IMR-90 (cell line): ENCODE measurements at regions of chr15 and their contacts with region 1.

Region 1: GRCh38 chr15:57327985-57328471 is 48.3 kb upstream of the CGNL1 start:
- DNase-seq: peak; percentile 99
- ATAC-seq: peak; percentile 88
- H3K4me3 ChIP-seq: no peak overlapping the region; the same call in 1 of the 2 replicates
- H3K27ac ChIP-seq: peak overlapping the region; percentile 38
- H3K4me1 ChIP-seq: peaks cover 4% of the 10 kb centered on the region
- H3K27me3 ChIP-seq: no peaks in the 10 kb centered on the region
- CTCF ChIP-seq: no peak
- POLR2A ChIP-seq: peak; percentile 23; the same call in 1 of the 2 replicates
- RAD21 ChIP-seq: no peak

Region 2: DNA sequence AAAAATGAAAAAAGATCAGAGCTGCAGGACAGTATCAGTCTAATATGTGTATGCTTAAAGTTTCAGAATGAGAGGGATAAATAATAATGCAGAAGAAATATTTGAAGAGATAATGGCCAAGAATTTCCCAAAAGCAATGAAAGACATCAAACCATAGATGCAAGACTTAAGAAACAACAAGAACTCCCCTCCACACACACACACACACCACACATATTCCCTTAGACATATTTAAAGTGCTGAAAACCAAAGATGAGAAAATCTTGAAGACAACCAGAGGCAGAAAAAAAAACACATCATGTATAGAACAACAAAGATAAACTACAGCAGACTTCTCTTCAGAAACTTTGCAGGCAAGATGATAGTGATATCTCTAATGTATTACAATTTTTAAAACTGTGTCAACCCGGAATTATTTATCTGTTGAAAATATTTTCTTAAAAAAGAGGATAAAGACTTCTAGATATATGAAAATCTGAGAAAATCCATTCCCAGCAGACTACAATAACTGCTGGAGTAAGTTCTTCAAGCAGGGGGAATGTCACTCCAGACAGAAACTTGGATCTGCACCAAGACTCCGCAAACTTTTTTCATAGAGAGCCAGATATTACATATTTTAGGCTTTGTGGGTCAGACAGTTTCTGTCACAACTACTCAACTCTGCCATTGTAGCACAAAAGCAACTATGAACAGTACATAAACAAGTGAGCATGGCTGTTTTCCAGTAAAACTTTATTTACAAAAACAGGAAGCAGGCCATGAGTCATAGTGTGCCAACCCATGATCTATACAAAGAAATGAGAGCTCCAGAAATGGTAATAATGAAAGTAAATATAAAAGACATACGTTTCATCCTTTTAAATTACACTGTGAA is 175.1 kb before region 1 on chr15:
- CTCF ChIA-PET with region 1: no interaction called
- POLR2A ChIA-PET with region 1: no interaction called
- dilution Hi-C with region 1: no loop called
- in situ Hi-C with region 1: no loop called
- intact Hi-C with region 1: loop called (anchors 5 kb)
- DNase-seq: peak; percentile 70
- ATAC-seq: peak; percentile 36; the same call in 1 of the 2 replicates
- H3K4me3 ChIP-seq: peak overlapping the region; percentile 2; the same call in 1 of the 2 replicates
- H3K27ac ChIP-seq: no peak overlapping the region
- H3K4me1 ChIP-seq: peaks cover 26% of the 10 kb centered on the region
- H3K27me3 ChIP-seq: no peaks in the 10 kb centered on the region
- CTCF ChIP-seq: no peak
- POLR2A ChIP-seq: no peak
- RAD21 ChIP-seq: no peak

Region 3: GRCh38 chr15:57218826-57219576 is 109.0 kb before region 1 on chr15:
- CTCF ChIA-PET with region 1: no interaction called
- POLR2A ChIA-PET with region 1: no interaction called
- dilution Hi-C with region 1: no loop called
- in situ Hi-C with region 1: no loop called
- intact Hi-C with region 1: loop called (anchors 5 kb)
- DNase-seq: peak; percentile 96
- ATAC-seq: peak; percentile 65
- H3K4me3 ChIP-seq: peak overlapping the region; percentile 79
- H3K27ac ChIP-seq: peak overlapping the region; percentile 74; the same call in 1 of the 2 replicates
- H3K4me1 ChIP-seq: peaks cover 10% of the 10 kb centered on the region
- H3K27me3 ChIP-seq: no peaks in the 10 kb centered on the region
- CTCF ChIP-seq: no peak
- POLR2A ChIP-seq: no peak
- RAD21 ChIP-seq: no peak